ENCODE measurements at regions of chr12 and their contacts with region 1.

Region 1: DNA sequence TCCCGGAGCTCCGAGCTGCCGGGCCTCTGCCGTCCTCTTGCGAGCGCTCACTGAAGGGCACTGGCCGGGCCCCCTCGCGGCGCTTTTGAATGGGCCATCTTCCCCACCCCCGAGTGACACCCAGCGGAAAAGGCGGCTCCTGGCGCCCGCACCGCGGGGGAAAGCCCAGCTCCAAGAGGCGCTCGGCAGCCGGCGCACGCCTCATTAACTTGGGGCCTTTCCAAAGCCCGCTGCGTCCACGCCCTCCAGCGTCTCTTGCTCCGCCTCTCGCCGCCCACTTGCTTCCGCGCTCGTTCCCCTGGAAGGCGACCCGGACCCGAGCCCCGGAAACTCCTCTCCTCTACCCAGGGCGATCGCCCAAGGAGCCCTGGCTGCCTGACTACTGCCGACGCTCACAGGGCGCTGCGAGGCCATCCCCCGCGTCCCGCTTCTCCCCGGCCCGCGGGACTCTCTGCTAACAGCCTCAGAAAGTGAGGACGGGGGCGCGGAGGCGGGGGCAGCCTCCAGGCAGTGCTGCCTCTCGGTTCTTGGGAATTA is at the start of gene PHLDA1:
- DNase-seq: peak; percentile 96 to 97
- ATAC-seq: peak; percentile 75 to 84
- H3K4me3 ChIP-seq: peak within 1 kb of the TSS; percentile 87
- H3K27ac ChIP-seq: peak within 1 kb of the TSS; percentile 97 to 99
- H3K4me1 ChIP-seq: peaks cover 36% of the 10 kb centered on the region
- CTCF ChIP-seq: peak; percentile 42
- EP300 ChIP-seq: no peak; a peak in 1 of 5 replicates
- POLR2A ChIP-seq: peak; percentile 94
- RAD21 ChIP-seq: peak; percentile 69 to 80
- polyA plus RNA-seq, gene PHLDA1: 54.1 and 71.6 TPM in 2 replicates

Region 2: DNA sequence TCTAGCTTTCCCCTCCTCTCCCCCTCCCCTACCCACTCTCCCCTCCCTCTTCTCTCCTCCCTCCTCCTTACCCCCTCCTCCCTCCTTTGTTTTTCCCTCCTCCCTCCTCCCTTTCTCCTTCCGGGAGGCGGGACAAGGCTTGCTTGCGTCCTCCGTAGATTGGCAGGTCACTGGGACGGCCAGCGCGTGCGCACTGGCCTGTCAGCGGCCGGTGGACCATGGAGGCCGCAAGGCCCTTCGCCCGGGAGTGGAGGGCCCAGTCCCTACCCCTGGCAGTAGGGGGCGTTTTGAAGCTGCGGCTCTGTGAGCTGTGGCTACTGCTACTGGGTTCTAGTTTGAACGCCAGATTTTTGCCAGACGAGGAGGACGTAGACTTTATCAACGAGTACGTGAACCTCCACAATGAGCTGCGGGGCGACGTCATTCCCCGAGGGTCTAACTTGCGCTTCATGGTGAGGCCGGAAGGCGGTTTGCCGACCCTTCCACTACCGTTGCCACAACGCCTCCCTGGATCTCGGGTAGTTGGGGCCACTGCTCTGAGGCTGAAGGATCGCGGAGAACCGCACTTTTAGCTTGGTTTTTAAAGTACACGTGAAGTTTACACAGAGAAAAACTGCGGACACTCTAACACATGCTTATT is 640.6 kb before region 1 on chr12 and contains the start of gene GLIPR1L2:
- CTCF ChIA-PET with region 1: no interaction called
- POLR2A ChIA-PET with region 1: interaction called, 10 read pairs
- DNase-seq: peak; percentile 81 to 99
- ATAC-seq: peak; percentile 99 to 100
- H3K4me3 ChIP-seq: peak within 1 kb of the TSS; percentile 48
- H3K27ac ChIP-seq: peak within 1 kb of the TSS; percentile 86 to 91
- H3K4me1 ChIP-seq: peaks cover 25% of the 10 kb centered on the region; the same call in 2 of the 3 replicates
- CTCF ChIP-seq: peak; percentile 85
- EP300 ChIP-seq: no peak
- POLR2A ChIP-seq: peak; percentile 70
- RAD21 ChIP-seq: peak; percentile 76 to 83
- polyA plus RNA-seq, gene GLIPR1L2: 0.90 and 0.97 TPM in 2 replicates

Region 3: DNA sequence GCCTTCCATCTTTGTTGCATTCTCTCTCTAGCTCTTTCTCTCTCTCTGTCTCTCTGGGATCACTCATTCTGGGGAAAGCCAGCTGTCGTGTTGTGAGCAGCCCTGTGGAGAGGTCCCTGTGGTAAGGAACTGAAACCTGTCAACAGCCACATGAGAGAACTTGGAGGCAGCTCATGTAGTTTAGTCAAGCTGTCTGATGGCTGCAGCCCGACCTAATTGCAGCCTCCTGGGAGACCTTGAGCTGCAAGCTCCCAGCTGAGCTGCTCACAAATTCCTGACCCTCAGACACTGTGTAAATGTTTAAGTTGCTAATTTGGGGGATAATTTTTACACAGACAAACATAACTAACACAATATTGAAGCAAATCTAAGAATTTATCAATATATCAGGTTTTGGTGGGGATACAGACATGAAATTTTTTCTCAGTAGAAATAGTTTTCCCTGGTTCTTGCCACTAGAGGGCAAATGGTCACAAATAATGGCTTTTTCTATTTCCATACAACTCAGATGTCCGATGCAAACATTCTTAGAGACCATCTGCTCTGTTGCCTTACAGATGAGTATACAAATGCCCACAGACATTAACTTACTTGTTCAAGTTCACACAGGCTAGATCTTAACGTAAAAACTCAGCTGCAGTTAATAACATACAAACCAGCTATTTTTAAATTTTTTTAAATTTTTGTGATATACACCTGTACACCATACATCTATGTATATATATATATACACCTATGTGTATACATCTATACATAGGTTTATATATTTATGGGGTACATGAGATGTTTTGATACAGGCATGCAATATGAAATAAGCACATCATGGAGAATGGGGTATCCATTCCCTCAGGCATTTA is 504.7 kb before region 1 on chr12:
- CTCF ChIA-PET with region 1: interaction called, 80 read pairs
- POLR2A ChIA-PET with region 1: interaction called, 29 read pairs
- DNase-seq: peak; percentile 48 to 70
- ATAC-seq: peak; percentile 80 to 86; a peak in 5 of 6 replicates
- H3K4me3 ChIP-seq: no peak overlapping the region
- H3K27ac ChIP-seq: peak overlapping the region; percentile 51 to 69; a peak in 5 of 6 replicates
- H3K4me1 ChIP-seq: peaks cover 10% of the 10 kb centered on the region
- CTCF ChIP-seq: peak; percentile 90
- EP300 ChIP-seq: no peak
- POLR2A ChIP-seq: no peak
- RAD21 ChIP-seq: peak; percentile 93 to 95

Region 4: DNA sequence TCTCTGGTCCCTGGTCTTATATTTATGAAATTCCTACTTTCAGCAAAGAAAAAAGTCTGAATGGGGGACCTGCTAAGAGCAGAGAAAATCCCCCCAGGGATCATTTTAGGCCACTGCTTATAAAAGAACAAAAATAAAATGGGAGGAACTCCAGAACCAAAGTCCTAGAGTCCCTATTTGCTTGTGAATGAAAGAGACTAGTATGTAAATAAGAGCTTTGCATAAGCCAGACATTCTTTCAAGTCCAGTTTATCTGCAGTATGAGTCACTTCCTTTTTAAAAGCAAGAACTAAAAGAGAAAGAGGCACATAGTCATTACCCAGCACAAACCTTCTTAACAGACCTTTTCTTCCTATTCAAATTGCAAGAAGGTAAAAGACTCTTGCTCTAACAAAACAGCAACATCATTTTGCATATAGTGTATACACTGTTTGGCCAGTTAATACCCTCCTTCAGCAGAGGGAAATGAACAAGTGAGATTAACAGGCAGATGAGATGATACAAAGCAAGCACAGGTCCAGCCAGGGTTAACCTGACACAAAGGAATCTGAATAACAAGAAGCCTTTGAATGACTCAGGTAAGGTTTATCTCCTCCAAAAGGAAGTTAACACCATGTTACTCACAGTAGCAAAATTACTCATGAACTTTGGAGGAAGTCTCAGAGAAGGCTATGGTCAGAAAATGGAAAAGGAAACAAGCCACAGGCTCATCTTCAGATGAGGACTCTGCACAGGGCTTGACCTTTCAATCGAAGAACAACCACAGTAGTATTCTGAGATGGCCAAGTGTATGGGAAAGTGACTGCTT is 87.3 kb before region 1 on chr12:
- CTCF ChIA-PET with region 1: interaction called, 4 read pairs
- POLR2A ChIA-PET with region 1: interaction called, 10 read pairs
- DNase-seq: peak; percentile 51 to 94
- ATAC-seq: peak; percentile 86 to 93
- H3K4me3 ChIP-seq: peak overlapping the region; percentile 2; the same call in 1 of the 3 replicates
- H3K27ac ChIP-seq: peak overlapping the region; percentile 91 to 96
- H3K4me1 ChIP-seq: peaks cover 54% of the 10 kb centered on the region
- CTCF ChIP-seq: no peak
- EP300 ChIP-seq: peak; percentile 88 to 90; a peak in 4 of 5 replicates
- POLR2A ChIP-seq: no peak
- RAD21 ChIP-seq: peak; percentile 17 to 34

Region 5: GRCh38 chr12:75977952-75978671 is 53.5 kb before region 1 on chr12:
- CTCF ChIA-PET with region 1: interaction called, 15 read pairs
- POLR2A ChIA-PET with region 1: interaction called, 17 read pairs
- DNase-seq: peak; percentile 94 to 100
- ATAC-seq: peak; percentile 90 to 97
- H3K4me3 ChIP-seq: 0 out of 3 replicates have a peak overlapping the region, but pooled peaks have one; percentile 12
- H3K27ac ChIP-seq: peak overlapping the region; percentile 96 to 98
- H3K4me1 ChIP-seq: peaks cover 67% of the 10 kb centered on the region
- CTCF ChIP-seq: no peak
- EP300 ChIP-seq: peak; percentile 99
- POLR2A ChIP-seq: no peak
- RAD21 ChIP-seq: peak; percentile 56 to 86

Region 6: DNA sequence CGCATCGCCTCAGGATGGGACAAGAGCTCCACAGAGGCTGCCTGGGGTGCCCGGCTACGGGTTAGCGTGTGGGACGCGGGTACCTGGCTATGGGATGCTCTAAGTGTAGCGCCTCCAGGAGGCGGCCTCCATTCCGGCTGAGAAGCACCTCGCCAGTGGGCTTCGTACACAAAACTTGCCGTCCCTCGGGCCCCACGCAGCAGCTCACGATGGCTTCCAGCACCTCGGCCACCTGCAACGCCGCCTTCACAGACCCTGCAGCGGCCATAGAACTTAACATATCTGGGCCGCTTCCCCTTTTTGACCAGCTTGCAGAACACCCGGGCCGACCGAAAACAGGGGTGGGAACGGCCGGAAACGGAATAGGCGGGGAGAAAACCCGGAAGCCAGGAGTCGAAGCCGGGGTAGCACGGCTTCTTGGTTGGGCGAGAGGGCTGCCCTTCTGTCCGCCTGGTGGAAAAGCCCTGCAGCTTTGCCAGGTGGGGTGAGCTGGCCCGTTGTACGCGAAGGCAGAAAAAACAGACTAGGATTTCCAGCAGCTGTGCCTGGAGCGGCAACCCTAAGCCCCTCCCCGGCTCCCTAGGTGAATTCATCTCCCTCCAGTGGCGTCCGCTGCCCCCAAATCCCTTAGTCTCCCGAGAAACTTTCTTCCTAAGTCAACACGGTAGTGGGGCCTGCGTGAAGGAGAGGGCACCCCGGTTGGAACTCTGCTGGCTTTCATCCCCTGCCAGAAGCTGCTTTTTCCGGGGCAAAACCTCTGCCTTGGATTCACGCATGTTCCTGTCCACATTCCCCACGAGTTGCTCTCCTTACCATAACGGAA is 316.7 kb after region 1 on chr12 and contains the start of gene BBS10:
- CTCF ChIA-PET with region 1: interaction called, 8 read pairs
- POLR2A ChIA-PET with region 1: interaction called, 19 read pairs
- DNase-seq: peak; percentile 86 to 92
- ATAC-seq: peak; percentile 99
- H3K4me3 ChIP-seq: peak within 1 kb of the TSS; percentile 67
- H3K27ac ChIP-seq: peak within 1 kb of the TSS; percentile 90 to 97
- H3K4me1 ChIP-seq: peaks cover 15% of the 10 kb centered on the region; the same call in 2 of the 3 replicates
- CTCF ChIP-seq: peak; percentile 64
- EP300 ChIP-seq: no peak
- POLR2A ChIP-seq: peak; percentile 87
- RAD21 ChIP-seq: peak; percentile 33 to 50
- polyA plus RNA-seq, gene BBS10: 11.6 and 15.1 TPM in 2 replicates

Measured in A549 (cell line).